Activated CD4-positive, alpha-beta T cell treated with anti-CD3 and anti-CD28 coated beads for 36 hours (primary cell): ENCODE measurements at regions of chr3 and their contacts with region 1.

Region 1: DNA sequence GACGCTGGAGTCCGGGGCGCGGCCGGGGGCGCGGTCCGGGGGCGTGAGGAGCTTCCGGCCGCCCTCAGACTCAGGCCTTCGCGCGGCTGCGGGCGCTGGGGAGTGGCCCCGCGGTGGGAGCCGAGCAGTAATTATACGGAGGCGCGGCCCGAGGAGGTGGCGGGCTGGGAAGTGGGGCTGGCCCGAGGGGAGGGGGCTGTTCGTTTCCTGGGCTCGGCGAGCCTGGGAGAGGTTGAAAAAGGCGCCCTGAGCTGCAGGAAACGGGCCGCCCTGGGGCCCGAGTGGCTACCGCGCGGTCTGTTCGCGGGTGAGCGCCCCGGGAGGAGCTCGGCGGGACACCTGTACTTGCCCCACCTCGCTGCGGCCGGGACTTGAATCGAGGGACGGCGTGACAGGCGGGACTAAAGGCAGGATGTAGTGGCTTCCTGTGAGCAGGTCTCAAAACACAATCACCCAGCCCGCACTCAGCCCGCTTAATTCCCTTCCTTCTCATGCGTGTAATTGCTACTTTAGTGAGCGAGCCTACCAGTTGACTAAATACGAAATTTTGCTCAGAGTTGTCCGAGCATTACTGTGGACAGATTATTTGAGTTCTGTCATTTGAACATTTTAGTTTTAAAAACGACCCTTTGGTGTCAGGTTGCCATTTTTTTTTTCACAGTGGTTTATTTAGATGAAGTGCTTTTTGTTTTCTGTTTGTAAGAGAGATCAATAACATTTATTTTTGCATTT is 860 bp downstream of the RASA2 start:
- DNase-seq: peak; percentile 93
- ATAC-seq: peak; percentile 69
- H3K4me3 Mint-ChIP-seq: peak overlapping the region; percentile 77
- H3K27ac Mint-ChIP-seq: peak overlapping the region; percentile 94
- H3K4me1 Mint-ChIP-seq: peaks cover 64% of the 10 kb centered on the region
- H3K27me3 Mint-ChIP-seq: no peaks in the 10 kb centered on the region

Region 2: GRCh38 chr3:141346418-141346817 is 141.3 kb before region 1 on chr3:
- CTCF ChIA-PET with region 1: no interaction called
- POLR2A ChIA-PET with region 1: no interaction called
- intact Hi-C with region 1: no loop called
- DNase-seq: no peak
- ATAC-seq: no peak
- H3K4me3 Mint-ChIP-seq: no peak overlapping the region
- H3K27ac Mint-ChIP-seq: no peak overlapping the region
- H3K4me1 Mint-ChIP-seq: no peaks in the 10 kb centered on the region
- H3K27me3 Mint-ChIP-seq: peaks cover 2% of the 10 kb centered on the region

Region 3: GRCh38 chr3:141412087-141412935 is 75.4 kb before region 1 on chr3:
- CTCF ChIA-PET with region 1: interaction called, 4 read pairs
- POLR2A ChIA-PET with region 1: no interaction called
- intact Hi-C with region 1: loop called (anchors 2 to 5 kb)
- DNase-seq: peak; percentile 71
- ATAC-seq: peak; percentile 24
- H3K4me3 Mint-ChIP-seq: peak overlapping the region; percentile 74
- H3K27ac Mint-ChIP-seq: peak overlapping the region; percentile 99
- H3K4me1 Mint-ChIP-seq: peaks cover 89% of the 10 kb centered on the region
- H3K27me3 Mint-ChIP-seq: no peaks in the 10 kb centered on the region

Region 4: DNA sequence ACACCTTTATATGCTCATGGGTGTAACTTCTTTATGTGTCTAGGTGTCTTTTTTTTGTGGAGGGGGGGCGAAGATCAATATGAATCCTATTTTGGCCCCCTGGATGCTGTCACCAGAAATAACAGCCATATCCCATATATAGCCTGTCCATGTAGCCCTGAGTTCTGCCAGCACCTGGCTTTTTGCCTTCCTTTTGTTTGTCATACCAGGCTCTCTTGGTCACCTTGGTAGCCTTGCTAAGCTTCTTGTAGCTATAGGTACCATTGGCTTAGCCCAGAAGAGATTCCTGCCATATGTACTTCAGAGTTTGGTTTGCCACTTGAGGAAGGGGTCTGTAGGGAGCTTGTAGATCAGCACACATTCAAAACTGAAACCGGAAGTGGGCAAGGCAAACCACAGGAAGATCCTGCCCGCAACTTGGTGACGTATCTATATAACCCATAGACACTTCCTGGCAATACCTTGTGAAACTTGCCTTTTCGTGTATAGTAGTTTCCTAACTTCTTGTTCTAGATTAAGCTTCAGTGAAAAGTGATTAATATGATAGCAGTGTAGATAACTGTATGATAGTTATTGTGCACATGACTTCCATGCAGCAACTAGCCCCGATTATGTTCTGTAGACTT is 11.0 kb after region 1 on chr3:
- CTCF ChIA-PET with region 1: interaction called, 11 read pairs
- POLR2A ChIA-PET with region 1: interaction called, 9 read pairs
- intact Hi-C with region 1: loop called (anchors 1 kb)
- DNase-seq: peak; percentile 90
- ATAC-seq: peak; percentile 84
- H3K4me3 Mint-ChIP-seq: peak overlapping the region; percentile 54
- H3K27ac Mint-ChIP-seq: peak overlapping the region; percentile 96
- H3K4me1 Mint-ChIP-seq: peaks cover 76% of the 10 kb centered on the region
- H3K27me3 Mint-ChIP-seq: no peaks in the 10 kb centered on the region

Region 5: GRCh38 chr3:141553055-141553454 is 65.4 kb after region 1 on chr3:
- CTCF ChIA-PET with region 1: interaction called, 15 read pairs
- POLR2A ChIA-PET with region 1: interaction called, 19 read pairs
- intact Hi-C with region 1: loop called (anchors 1 kb)
- DNase-seq: no peak
- ATAC-seq: peak; percentile 63
- H3K4me3 Mint-ChIP-seq: no peak overlapping the region
- H3K27ac Mint-ChIP-seq: peak overlapping the region; percentile 88
- H3K4me1 Mint-ChIP-seq: peaks cover 53% of the 10 kb centered on the region
- H3K27me3 Mint-ChIP-seq: no peaks in the 10 kb centered on the region